ENCODE measurements at regions of chr11 and their contacts with region 1.

Region 1: DNA sequence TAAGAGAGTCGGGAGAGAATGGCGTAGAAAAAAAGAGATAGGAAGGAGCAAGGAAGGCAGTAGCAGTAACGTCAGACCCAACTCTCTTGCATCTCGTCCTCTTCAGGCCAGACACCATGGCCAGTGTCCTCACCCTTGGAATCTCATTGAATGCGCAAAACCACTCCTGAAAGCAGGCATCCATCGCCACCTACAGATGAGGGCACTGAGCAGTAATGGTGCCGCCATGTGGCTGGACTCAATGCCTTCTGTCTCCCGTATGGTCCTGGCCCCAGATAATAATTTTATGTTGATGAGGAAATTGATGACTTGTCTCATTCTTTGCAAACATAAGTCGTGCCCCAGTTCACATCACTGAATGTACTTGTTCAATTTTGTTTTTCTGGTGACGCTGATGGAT is 17.8 kb upstream of the ALX4 start:
- DNase-seq: no peak
- H3K4me3 ChIP-seq: no peak overlapping the region
- H3K27ac ChIP-seq: no peak overlapping the region
- H3K4me1 ChIP-seq: peaks cover 34% of the 10 kb centered on the region
- H3K27me3 ChIP-seq: no peaks in the 10 kb centered on the region
- CTCF ChIP-seq: peak; percentile 43

Region 2: DNA sequence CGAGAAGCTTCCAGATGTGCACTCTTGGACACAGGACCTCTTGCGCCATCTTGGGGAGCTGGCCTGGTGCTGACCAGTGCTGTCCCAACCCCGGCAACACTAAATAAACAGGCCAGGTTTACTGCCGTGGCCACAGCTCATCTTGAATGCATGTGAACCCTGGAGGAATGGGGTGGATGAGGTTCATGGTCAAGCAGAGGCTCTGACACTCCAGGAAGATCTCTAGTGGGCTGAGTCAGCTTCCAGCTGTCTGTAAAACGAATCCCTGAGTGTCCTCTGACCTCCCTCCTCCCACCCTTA is 69.6 kb before region 1 on chr11:
- CTCF ChIA-PET with region 1: no interaction called
- POLR2A ChIA-PET with region 1: no interaction called
- intact Hi-C with region 1: loop called (anchors 2 kb)
- DNase-seq: no peak
- H3K4me3 ChIP-seq: no peak overlapping the region
- H3K27ac ChIP-seq: peak overlapping the region; percentile 3
- H3K4me1 ChIP-seq: no peaks in the 10 kb centered on the region
- H3K27me3 ChIP-seq: no peaks in the 10 kb centered on the region
- CTCF ChIP-seq: no peak